ENCODE measurements at regions of chr6 and their contacts with region 1.

Region 1: DNA sequence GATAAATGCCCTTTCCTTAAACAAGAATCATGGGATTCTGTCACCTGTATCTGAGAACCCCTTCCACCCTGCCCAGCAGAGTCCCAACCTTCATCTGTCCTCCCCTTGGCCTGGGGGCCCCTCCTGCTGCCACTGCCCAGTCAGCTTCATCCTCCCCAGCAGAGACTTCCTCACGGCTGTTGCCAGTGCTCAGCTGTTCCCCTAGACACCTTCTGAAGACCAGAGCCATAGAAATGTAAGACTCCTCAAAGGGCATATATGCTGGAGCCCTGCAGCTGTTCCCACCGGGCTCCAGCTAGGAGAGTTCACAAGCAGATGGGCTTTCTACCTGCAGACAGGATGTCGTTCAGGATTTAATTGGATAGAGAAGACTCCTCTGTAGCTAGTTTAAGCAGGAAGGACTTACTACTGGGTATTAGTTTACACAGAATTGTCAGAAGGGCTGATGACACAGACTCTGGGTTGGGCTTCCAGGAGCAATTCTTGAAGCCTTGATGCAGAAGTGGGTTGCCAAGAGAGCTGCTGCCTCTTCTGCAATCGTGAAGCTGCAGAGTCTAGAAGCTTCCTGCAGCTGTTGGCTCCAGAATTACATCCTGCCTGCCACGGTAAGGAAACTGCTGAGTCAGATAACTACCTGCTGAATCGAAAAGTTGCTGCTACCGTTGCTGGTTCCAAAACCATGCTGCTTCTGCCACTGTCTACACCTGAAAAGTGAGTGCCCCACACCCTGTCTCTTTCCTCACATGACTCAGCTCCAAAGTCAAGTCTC is 57.1 kb upstream of the MLN start:
- DNase-seq: peak; percentile 64
- H3K4me3 Mint-ChIP-seq: no peak overlapping the region
- H3K27ac Mint-ChIP-seq: no peak overlapping the region
- H3K4me1 Mint-ChIP-seq: peaks cover 37% of the 10 kb centered on the region
- H3K27me3 Mint-ChIP-seq: no peaks in the 10 kb centered on the region

Region 2: GRCh38 chr6:33794891-33795623 is 65.8 kb before region 1 on chr6:
- CTCF ChIA-PET with region 1: no interaction called
- intact Hi-C with region 1: no loop called
- DNase-seq: no peak
- H3K4me3 Mint-ChIP-seq: no peak overlapping the region
- H3K27ac Mint-ChIP-seq: no peak overlapping the region
- H3K4me1 Mint-ChIP-seq: no peaks in the 10 kb centered on the region
- H3K27me3 Mint-ChIP-seq: peaks cover 10% of the 10 kb centered on the region

Region 3: DNA sequence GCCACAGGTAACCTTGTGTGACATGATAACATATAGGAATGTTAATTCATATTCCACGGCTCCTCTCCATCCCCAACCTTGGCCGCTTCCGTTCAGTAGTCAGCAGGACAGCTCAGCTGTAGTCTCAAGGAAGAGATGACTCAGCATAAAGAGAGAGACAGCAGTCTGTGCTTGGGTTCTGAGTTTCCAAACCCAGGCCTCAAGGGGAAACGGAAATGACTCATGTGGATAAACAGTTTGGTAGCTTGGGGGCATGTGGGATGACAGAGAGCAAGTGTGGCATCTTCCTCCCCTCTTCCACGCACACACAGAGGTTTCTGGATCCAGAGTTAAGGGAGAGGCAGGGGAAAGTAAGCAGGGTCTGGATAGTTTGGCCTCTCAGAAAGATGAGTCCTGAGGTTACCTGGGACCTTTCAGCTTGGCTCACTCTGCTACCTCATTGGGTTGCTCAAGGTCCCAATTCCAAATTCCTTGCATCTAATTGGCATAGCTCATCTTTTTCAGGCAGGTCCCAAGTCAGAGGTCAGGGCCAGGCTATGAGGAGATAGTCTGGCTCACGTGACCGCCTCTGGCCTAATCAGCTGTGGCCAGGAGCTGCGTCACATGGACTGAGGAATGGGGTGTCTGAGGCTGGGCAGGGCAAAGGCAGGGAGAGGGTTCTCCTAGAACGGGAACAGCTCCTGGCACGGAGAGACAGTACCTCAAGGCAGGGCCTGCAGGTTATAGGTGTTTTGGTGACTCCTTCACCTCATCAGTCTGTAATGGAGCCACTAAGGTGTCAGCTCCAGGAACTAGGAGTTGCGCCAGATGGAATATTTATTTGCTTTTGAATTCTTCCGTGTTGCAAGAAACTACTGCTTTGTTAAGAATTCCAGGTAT is 20.6 kb before region 1 on chr6:
- CTCF ChIA-PET with region 1: interaction called, 3 read pairs
- intact Hi-C with region 1: loop called (anchors 2 kb)
- DNase-seq: peak; percentile 72
- H3K4me3 Mint-ChIP-seq: no peak overlapping the region
- H3K27ac Mint-ChIP-seq: no peak overlapping the region
- H3K4me1 Mint-ChIP-seq: peaks cover 12% of the 10 kb centered on the region
- H3K27me3 Mint-ChIP-seq: no peaks in the 10 kb centered on the region

Region 4: GRCh38 chr6:33886673-33887144 is 25.8 kb after region 1 on chr6:
- CTCF ChIA-PET with region 1: no interaction called
- intact Hi-C with region 1: loop called (anchors 2 kb)
- DNase-seq: peak; percentile 55
- H3K4me3 Mint-ChIP-seq: no peak overlapping the region
- H3K27ac Mint-ChIP-seq: no peak overlapping the region
- H3K4me1 Mint-ChIP-seq: peaks cover 9% of the 10 kb centered on the region
- H3K27me3 Mint-ChIP-seq: no peaks in the 10 kb centered on the region

Region 5: GRCh38 chr6:33904050-33904746 is 43.3 kb after region 1 on chr6:
- CTCF ChIA-PET with region 1: interaction called, 3 read pairs
- intact Hi-C with region 1: loop called (anchors 2 kb)
- DNase-seq: peak; percentile 87
- H3K4me3 Mint-ChIP-seq: no peak overlapping the region
- H3K27ac Mint-ChIP-seq: peak overlapping the region; percentile 83
- H3K4me1 Mint-ChIP-seq: peaks cover 58% of the 10 kb centered on the region
- H3K27me3 Mint-ChIP-seq: no peaks in the 10 kb centered on the region

Region 6: GRCh38 chr6:34027445-34027936 is 166.6 kb after region 1 on chr6:
- CTCF ChIA-PET with region 1: interaction called, 6 read pairs
- intact Hi-C with region 1: loop called (anchors 2 kb)
- DNase-seq: peak; percentile 63
- H3K4me3 Mint-ChIP-seq: no peak overlapping the region
- H3K27ac Mint-ChIP-seq: no peak overlapping the region
- H3K4me1 Mint-ChIP-seq: no peaks in the 10 kb centered on the region
- H3K27me3 Mint-ChIP-seq: no peaks in the 10 kb centered on the region